SK-N-SH (cell line): ENCODE measurements at regions of chr2 and their contacts with region 1.

Region 1: DNA sequence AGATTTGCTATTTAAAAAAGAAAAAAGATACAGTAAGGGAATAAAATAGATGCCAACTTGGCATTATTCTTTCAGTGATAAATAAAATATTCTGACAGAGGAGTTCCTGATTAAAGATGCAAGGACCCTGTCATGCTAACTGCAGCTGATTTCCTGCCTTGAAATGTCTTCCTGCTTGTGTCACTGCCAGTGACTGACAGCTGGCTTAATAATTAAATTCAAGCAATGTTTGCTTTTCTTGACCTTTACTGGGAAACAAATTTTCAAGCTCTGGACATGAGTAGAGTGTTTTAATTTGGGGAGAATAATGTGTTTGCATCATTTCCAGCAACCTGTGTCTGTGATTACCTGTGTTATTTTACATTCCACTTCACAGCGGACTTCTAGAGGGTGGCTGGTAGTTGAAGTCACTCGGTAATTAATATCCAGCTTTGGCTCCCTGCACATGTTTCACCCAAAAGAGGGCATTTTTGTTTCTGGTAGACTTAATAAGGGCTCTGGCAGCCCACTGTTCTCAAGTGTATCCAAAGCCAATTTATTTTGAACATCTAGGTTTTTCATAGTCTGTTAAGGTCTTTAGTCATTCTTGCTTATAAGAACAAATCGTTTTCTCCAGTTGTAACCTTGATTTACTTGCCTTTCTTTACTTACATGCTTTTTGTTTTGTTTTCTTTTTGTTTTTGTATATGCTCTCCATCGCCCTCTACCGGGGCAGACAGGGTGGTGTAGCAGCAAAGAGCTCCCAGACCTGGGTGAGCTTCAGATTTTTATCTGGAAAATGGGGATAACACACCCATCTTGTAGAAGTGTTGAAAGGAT is 48.5 kb upstream of the PROKR1 start:
- DNase-seq: peak; percentile 48
- H3K4me3 ChIP-seq: no peak overlapping the region
- H3K27ac ChIP-seq: peak overlapping the region in 1 of 2 experiments; percentile 28; a peak in 1 of 4 replicates
- H3K4me1 ChIP-seq: peaks cover 0 to 4% of the 10 kb centered on the region in 2 experiments; a peak in 2 of 4 replicates
- H3K27me3 ChIP-seq: no peaks in the 10 kb centered on the region
- CTCF ChIP-seq: peak; percentile 92
- EP300 ChIP-seq: no peak
- RAD21 ChIP-seq: peak; percentile 57

Region 2: DNA sequence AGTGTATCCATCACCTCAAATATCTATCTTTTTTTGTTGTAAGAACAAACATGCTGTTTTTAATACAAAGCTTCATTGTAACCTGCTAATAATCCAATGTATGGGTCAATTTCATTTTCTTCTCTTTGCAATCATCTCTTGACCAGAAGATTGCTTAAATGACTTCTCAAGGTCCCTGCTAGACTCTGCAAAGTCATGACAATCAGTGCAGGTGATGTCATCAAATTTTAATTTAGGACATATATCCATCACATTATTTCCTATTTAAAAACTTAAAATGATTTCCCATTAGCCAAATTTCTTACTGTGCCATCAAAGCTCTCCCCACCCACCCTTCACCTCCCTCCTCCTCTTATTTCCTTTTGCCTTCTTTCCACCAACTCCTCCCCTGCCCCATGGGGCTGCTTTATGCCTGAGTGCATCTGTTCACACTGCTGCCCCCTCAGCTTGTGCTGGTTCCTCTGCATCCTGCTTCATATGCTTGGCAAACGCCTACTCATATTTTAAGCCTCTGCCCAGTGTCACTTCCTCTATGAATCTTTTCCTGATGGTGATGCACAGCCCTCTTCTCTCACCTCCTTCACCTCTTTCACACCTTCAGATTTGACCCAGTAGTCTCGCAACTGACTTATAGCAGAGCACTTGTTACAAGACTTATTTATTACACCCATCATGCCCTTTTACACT is 209.5 kb before region 1 on chr2:
- CTCF ChIA-PET with region 1: no interaction called
- POLR2A ChIA-PET with region 1: no interaction called
- DNase-seq: no peak
- H3K4me3 ChIP-seq: no peak overlapping the region
- H3K27ac ChIP-seq: no peak overlapping the region
- H3K4me1 ChIP-seq: no peaks in the 10 kb centered on the region
- H3K27me3 ChIP-seq: peaks cover 13% of the 10 kb centered on the region; the same call in 1 of the 2 replicates
- CTCF ChIP-seq: no peak
- EP300 ChIP-seq: no peak
- RAD21 ChIP-seq: no peak

Region 3: DNA sequence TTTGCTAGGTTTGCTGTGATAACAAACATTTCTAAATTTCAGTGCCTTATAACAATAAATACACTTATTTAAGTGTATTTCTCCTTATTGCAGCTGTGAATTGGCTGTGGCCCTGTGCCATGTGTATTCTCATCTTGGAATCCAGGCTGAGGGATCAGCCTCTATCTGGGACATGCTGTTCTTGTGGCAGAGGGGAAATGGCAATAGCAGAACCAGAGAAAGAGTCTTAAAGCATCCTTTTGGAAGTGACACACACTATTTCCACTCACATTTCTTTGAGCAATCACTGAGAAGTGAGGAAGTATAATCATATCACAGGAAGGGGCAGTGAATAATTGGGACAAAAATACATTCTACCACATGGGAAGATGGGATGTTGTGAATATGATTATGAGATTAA is 17.7 kb before region 1 on chr2:
- CTCF ChIA-PET with region 1: interaction called, 10 read pairs
- POLR2A ChIA-PET with region 1: no interaction called
- DNase-seq: no peak
- H3K4me3 ChIP-seq: no peak overlapping the region
- H3K27ac ChIP-seq: no peak overlapping the region
- H3K4me1 ChIP-seq: no peaks in the 10 kb centered on the region
- H3K27me3 ChIP-seq: no peaks in the 10 kb centered on the region
- CTCF ChIP-seq: no peak
- EP300 ChIP-seq: no peak
- RAD21 ChIP-seq: no peak

Region 4: GRCh38 chr2:68605939-68606338 is 11.1 kb after region 1 on chr2:
- CTCF ChIA-PET with region 1: interaction called, 17 read pairs
- POLR2A ChIA-PET with region 1: no interaction called
- DNase-seq: no peak
- H3K4me3 ChIP-seq: no peak overlapping the region
- H3K27ac ChIP-seq: no peak overlapping the region
- H3K4me1 ChIP-seq: no peaks in the 10 kb centered on the region
- H3K27me3 ChIP-seq: no peaks in the 10 kb centered on the region
- CTCF ChIP-seq: no peak
- EP300 ChIP-seq: no peak
- RAD21 ChIP-seq: no peak

Region 5: DNA sequence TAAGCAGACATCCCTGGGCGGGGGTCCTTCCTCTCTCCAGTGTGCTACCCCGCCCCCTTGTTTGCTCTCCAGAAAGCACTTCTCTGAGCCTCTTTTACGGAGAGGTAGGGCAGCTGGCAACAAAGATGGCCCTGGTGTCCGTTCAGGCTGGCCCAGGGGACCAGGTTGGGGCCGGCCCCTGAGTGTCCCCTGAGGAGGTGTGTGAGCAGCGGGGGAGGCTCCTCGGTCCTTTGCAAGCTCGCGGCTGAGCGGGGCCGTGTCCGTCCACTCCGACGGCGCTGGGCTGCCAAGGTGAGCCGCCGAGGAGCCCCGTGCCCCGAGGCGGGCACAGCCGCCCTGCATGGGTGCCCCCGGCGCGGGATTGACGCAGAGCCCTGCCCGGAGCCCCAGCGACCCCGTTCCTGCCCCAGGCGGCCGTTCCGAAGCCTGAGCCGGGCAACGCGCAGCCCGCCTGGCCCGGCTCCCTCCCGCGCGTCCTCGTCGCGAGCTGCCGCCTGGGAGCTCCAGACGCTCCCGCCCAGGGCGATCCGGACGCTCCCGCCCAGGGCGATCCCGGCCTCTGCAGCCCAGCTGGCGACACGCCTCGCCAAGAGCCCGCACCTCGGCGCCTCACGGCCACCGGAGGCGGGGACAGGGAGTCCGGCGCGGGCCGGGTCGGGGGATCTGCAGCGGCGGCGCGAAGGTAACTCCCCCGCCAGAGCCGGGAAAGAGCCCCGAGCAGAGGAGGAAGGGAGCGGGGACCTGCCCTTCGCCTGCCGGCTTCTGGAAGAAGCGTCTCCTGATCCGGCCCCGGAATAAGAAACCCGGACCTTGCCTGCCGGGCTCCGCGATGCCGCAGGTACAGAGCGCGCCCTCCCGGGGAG is 48.4 kb after region 1 on chr2 and contains the start of gene PROKR1:
- CTCF ChIA-PET with region 1: interaction called, 10 read pairs
- POLR2A ChIA-PET with region 1: no interaction called
- DNase-seq: peak; percentile 78
- H3K4me3 ChIP-seq: peak within 1 kb of the TSS; percentile 49 to 54
- H3K27ac ChIP-seq: no peak within 1 kb of the TSS
- H3K4me1 ChIP-seq: no peaks in the 10 kb centered on the region; a peak in 1 of 4 replicates
- H3K27me3 ChIP-seq: peaks cover 41% of the 10 kb centered on the region
- CTCF ChIP-seq: no peak
- EP300 ChIP-seq: no peak
- RAD21 ChIP-seq: no peak; the same call in 1 of the 2 replicates
- polyA plus RNA-seq, gene PROKR1: not detected in 2 replicates